Sigmoid colon (tissue), 7 donors: ENCODE measurements at regions of chr2 and their contacts with region 1.

Region 1: GRCh38 chr2:88671786-88672427 is 19.6 kb upstream of the RPIA start:
- DNase-seq: no peak
- H3K4me3 ChIP-seq: no peak overlapping the region
- H3K27ac ChIP-seq: no peak overlapping the region
- H3K4me1 ChIP-seq: no peaks in the 10 kb centered on the region
- H3K27me3 ChIP-seq: no peaks in the 10 kb centered on the region
- CTCF ChIP-seq: peak; percentile 53 to 86 (median 67)
- EP300 ChIP-seq: no peak
- POLR2A ChIP-seq: no peak

Region 2: DNA sequence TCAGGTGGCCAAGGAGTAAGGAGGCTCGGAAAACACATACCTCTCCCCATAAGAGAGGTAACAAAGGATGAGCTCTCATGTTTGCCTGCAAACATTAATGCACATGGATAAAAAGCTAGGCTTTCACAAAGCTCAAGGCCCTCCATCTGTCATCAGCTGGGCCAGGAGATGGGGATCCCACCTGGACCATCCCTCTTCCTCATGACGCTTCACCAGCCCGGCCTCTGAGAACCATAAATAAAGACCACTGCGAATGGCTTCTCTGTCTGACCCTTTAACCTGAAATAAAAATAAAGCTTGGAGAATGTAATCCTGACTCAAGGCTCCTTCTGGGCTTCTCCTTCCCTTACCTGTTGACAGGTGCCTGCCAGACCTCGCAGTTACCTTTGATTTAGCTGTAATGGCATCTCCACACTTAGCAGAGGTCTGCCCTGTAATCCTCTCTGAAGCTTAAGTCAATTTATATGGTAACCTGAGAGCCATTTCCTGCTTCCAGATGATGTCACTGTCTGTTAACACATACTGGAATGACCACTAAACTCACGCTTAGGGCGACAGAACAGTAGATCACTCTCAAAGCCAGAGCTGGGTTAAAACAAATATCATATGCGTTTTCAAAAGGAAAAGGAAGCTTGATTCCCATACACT is 190.1 kb before region 1 on chr2:
- intact Hi-C with region 1: no loop called
- DNase-seq: no peak
- H3K4me3 ChIP-seq: no peak overlapping the region
- H3K27ac ChIP-seq: no peak overlapping the region
- H3K4me1 ChIP-seq: no peaks in the 10 kb centered on the region
- H3K27me3 ChIP-seq: peaks cover 0 to 7% (median 6%) of the 10 kb centered on the region in 3 donors
- CTCF ChIP-seq: no peak
- EP300 ChIP-seq: no peak
- POLR2A ChIP-seq: no peak

Region 3: GRCh38 chr2:88590998-88591613 is 80.8 kb before region 1 on chr2:
- intact Hi-C with region 1: loop called (anchors 1 kb)
- DNase-seq: no peak
- H3K4me3 ChIP-seq: no peak overlapping the region
- H3K27ac ChIP-seq: no peak overlapping the region
- H3K4me1 ChIP-seq: no peaks in the 10 kb centered on the region
- H3K27me3 ChIP-seq: no peaks in the 10 kb centered on the region
- CTCF ChIP-seq: peak; percentile 23 to 70 (median 60)
- EP300 ChIP-seq: no peak
- POLR2A ChIP-seq: no peak

Region 4: GRCh38 chr2:88810017-88810416 is 138.1 kb after region 1 on chr2:
- intact Hi-C with region 1: no loop called
- DNase-seq: no peak
- H3K4me3 ChIP-seq: no peak overlapping the region
- H3K27ac ChIP-seq: no peak overlapping the region
- H3K4me1 ChIP-seq: no peaks in the 10 kb centered on the region
- H3K27me3 ChIP-seq: peaks cover 0 to 4% (median 0%) of the 10 kb centered on the region in 3 donors
- CTCF ChIP-seq: no peak
- EP300 ChIP-seq: no peak
- POLR2A ChIP-seq: no peak

Region 5: DNA sequence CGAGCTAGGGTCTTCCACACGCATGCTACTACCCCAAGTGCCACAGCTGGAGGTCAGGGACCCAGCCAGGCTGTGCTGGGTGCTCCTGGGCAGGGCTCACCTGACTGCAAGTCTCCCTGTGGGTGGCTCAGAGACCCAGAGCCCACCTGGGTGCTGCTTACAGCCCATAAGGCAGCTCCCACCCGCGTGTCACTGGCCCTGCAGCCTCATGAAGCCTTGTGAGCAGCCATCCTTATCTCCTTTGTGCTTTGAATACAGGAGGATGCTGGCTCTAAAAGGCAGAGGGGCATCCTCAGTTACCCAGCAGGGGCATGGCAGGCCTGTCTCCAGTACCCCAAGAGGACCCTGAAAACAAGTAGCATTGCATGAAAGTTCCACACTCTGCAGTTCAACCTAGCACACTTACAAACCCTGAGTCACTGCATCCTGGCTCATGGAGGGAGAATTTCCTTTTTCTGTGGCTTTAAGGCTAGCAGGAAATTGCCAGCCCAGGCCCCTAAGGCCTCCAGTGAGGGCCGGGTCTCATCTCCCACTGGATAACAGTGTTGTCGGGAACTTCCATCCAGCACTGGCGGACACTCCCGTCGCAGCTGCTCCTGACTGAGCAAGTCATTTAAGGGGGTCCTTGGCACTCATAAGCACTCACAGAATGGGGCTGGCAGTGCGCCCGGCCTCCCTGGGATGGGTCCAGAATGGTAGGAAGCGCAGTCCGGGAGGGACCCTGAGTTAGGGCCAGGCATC is 156.7 kb after region 1 on chr2:
- intact Hi-C with region 1: no loop called
- DNase-seq: no peak
- H3K4me3 ChIP-seq: no peak overlapping the region
- H3K27ac ChIP-seq: peak overlapping the region in 1 of 4 donors; percentile 52
- H3K4me1 ChIP-seq: no peaks in the 10 kb centered on the region
- H3K27me3 ChIP-seq: peaks cover 0 to 7% (median 0%) of the 10 kb centered on the region in 3 donors
- CTCF ChIP-seq: no peak
- EP300 ChIP-seq: no peak
- POLR2A ChIP-seq: no peak